ENCODE measurements at regions of chr19 and their contacts with region 1.

Region 1: GRCh38 chr19:49118565-49119410 is at the start of gene C19orf73:
- DNase-seq: peak; percentile 91
- ATAC-seq: peak; percentile 86
- H3K4me3 ChIP-seq: peak within 1 kb of the TSS; percentile 59
- H3K27ac ChIP-seq: peak within 1 kb of the TSS; percentile 81
- H3K4me1 ChIP-seq: peaks cover 6% of the 10 kb centered on the region
- H3K27me3 ChIP-seq: peaks cover 8% of the 10 kb centered on the region
- CTCF ChIP-seq: no peak; the same call in 1 of the 2 replicates
- POLR2A ChIP-seq: peak; percentile 50; the same call in 1 of the 2 replicates
- RAD21 ChIP-seq: no peak
- total RNA-seq, gene C19orf73: 0.28 TPM in 1 of 2 replicates, not detected in the other

Region 2: DNA sequence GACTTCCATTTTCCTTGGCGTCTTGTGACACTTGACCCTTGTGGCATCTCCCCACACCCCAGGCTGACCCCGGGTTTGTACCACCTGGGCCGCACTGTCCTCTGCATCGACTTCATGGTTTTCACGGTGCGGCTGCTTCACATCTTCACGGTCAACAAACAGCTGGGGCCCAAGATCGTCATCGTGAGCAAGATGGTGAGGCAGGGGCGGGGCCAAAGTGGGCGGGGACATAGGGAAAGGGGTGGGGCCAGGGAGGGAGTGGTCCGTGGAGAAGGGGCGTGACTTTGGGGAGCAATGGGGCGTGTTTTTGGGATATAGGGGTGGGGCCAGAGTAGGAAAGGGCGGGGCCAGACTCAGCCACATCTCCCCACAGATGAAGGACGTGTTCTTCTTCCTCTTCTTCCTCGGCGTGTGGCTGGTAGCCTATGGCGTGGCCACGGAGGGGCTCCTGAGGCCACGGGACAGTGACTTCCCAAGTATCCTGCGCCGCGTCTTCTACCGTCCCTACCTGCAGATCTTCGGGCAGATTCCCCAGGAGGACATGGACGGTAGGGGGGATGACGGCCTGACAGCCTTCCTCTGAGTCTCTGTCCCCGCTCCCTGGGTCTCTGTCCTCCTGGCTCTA is 81.6 kb after region 1 on chr19:
- CTCF ChIA-PET with region 1: interaction called, 4 read pairs
- POLR2A ChIA-PET with region 1: no interaction called
- dilution Hi-C with region 1: no loop called
- in situ Hi-C with region 1: no loop called
- intact Hi-C with region 1: loop called (anchors 5 kb)
- DNase-seq: no peak
- ATAC-seq: peak; percentile 28; the same call in 1 of the 2 replicates
- H3K4me3 ChIP-seq: no peak overlapping the region
- H3K27ac ChIP-seq: no peak overlapping the region
- H3K4me1 ChIP-seq: no peaks in the 10 kb centered on the region
- H3K27me3 ChIP-seq: no peaks in the 10 kb centered on the region
- CTCF ChIP-seq: no peak
- POLR2A ChIP-seq: no peak
- RAD21 ChIP-seq: no peak

Region 3: GRCh38 chr19:49983645-49984229 is 864.9 kb after region 1 on chr19:
- CTCF ChIA-PET with region 1: no interaction called
- POLR2A ChIA-PET with region 1: no interaction called
- dilution Hi-C with region 1: no loop called
- in situ Hi-C with region 1: no loop called
- intact Hi-C with region 1: no loop called
- DNase-seq: peak; percentile 37
- ATAC-seq: peak; percentile 58
- H3K4me3 ChIP-seq: no peak overlapping the region
- H3K27ac ChIP-seq: no peak overlapping the region
- H3K4me1 ChIP-seq: no peaks in the 10 kb centered on the region
- H3K27me3 ChIP-seq: no peaks in the 10 kb centered on the region
- CTCF ChIP-seq: peak; percentile 73
- POLR2A ChIP-seq: no peak
- RAD21 ChIP-seq: peak; percentile 79